ENCODE measurements at regions of chr1 and their contacts with region 1.

Region 1: GRCh38 chr1:23559136-23559984 is at the start of gene ID3:
- DNase-seq: peak; percentile 96
- H3K4me3 Mint-ChIP-seq: peak within 1 kb of the TSS; percentile 94
- H3K27ac Mint-ChIP-seq: peak within 1 kb of the TSS; percentile 90
- H3K4me1 Mint-ChIP-seq: peaks cover 49% of the 10 kb centered on the region
- H3K27me3 Mint-ChIP-seq: no peaks in the 10 kb centered on the region
- CTCF ChIP-seq: no peak
- total RNA-seq, gene ID3: 15.7 and 34.8 TPM in 2 replicates

Region 2: DNA sequence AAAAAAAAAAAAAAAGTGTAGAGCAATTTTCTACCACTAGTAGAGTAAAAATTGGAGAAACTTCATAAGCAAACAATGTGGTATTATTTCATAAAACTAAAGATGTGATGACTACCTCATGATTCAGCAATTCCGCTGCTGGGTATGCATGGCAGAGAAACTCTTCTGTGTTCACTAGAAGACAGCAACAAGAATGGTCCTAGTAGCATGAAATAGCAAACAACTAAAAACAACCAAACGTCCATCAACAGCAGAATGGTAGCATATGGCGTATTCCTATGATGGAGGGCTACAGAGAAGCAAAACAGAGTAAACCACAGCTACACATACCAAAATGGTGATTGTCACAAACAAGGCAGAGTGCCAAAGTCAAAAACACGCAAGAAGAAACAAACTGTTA is 361.0 kb before region 1 on chr1:
- CTCF ChIA-PET with region 1: no interaction called
- POLR2A ChIA-PET with region 1: no interaction called
- intact Hi-C with region 1: no loop called
- DNase-seq: peak; percentile 85
- H3K4me3 Mint-ChIP-seq: peak overlapping the region; percentile 36
- H3K27ac Mint-ChIP-seq: peak overlapping the region; percentile 89
- H3K4me1 Mint-ChIP-seq: peaks cover 33% of the 10 kb centered on the region
- H3K27me3 Mint-ChIP-seq: no peaks in the 10 kb centered on the region
- CTCF ChIP-seq: no peak

Region 3: DNA sequence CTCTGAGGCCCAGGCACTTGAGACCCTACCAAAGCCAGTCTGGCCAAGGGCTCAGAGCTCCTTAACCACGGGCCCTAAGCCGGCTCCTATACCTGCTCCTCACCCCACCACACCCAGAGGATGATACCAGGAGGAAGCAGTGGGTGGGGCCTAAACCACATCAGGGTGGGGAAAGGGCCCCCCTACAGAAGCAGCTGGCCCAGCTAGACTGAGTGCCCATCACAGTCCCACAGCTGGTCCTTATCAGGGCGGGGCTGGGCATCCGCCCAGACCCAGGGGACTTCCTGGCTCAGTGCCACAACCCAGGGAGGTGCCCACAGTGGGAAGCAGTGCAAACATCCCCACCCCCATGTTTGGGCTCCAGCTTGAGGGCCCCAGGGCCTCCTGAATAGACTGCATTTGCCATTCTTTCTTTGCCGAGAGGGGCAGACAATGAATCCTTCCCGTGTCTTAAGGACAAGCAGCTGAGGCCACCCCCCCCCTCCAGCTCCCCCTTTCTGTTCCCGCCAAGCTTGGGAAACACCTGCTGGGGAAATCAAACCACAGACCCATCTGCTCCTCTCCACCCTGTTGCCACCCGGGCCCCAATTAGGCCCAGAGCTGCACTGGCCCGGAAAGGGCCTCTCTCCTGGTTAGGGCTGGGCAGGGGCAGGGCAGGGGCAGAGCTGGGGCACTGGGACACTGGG is 34.5 kb before region 1 on chr1:
- CTCF ChIA-PET with region 1: no interaction called
- POLR2A ChIA-PET with region 1: no interaction called
- intact Hi-C with region 1: no loop called
- DNase-seq: no peak
- H3K4me3 Mint-ChIP-seq: no peak overlapping the region
- H3K27ac Mint-ChIP-seq: no peak overlapping the region
- H3K4me1 Mint-ChIP-seq: peaks cover 19% of the 10 kb centered on the region
- H3K27me3 Mint-ChIP-seq: no peaks in the 10 kb centered on the region
- CTCF ChIP-seq: no peak

Region 4: DNA sequence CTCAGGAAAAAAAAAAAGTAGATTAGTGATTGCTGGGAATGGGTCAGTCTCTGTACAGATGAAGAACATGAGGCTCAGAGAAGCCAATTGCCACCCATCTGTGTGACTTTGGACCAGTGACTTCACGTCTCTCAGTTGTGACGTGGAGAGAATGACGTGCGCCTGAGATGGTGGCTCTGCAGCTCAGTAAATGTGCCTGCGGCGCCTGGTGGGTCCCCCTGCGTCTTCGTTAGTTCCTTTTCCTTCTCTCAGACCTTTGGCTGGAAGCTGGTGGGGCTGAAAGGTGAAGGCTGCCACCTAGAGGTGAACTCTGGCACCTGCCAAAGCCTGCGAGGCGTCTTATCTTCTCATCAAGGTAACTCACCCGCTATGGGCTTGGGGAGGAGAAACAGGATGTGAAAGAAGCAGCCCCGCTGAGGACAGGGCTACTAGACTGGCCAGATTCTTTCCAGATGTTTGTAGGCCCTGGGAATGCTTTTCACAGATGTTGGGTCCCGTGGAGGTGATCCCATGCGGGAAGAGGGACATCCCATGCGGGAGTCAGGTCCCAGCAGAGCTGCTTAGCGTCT is 19.6 kb before region 1 on chr1:
- CTCF ChIA-PET with region 1: interaction called, 23 read pairs
- POLR2A ChIA-PET with region 1: interaction called, 8 read pairs
- intact Hi-C with region 1: no loop called
- DNase-seq: peak; percentile 90
- H3K4me3 Mint-ChIP-seq: no peak overlapping the region
- H3K27ac Mint-ChIP-seq: no peak overlapping the region
- H3K4me1 Mint-ChIP-seq: peaks cover 18% of the 10 kb centered on the region
- H3K27me3 Mint-ChIP-seq: no peaks in the 10 kb centered on the region
- CTCF ChIP-seq: peak; percentile 91

Region 5: GRCh38 chr1:23585447-23586015 is 26.2 kb after region 1 on chr1:
- CTCF ChIA-PET with region 1: interaction called, 7 read pairs
- POLR2A ChIA-PET with region 1: interaction called, 622 read pairs
- intact Hi-C with region 1: loop called (anchors 1 kb)
- DNase-seq: peak; percentile 96
- H3K4me3 Mint-ChIP-seq: peak overlapping the region; percentile 23
- H3K27ac Mint-ChIP-seq: peak overlapping the region; percentile 85
- H3K4me1 Mint-ChIP-seq: peaks cover 43% of the 10 kb centered on the region
- H3K27me3 Mint-ChIP-seq: no peaks in the 10 kb centered on the region
- CTCF ChIP-seq: no peak

Region 6: DNA sequence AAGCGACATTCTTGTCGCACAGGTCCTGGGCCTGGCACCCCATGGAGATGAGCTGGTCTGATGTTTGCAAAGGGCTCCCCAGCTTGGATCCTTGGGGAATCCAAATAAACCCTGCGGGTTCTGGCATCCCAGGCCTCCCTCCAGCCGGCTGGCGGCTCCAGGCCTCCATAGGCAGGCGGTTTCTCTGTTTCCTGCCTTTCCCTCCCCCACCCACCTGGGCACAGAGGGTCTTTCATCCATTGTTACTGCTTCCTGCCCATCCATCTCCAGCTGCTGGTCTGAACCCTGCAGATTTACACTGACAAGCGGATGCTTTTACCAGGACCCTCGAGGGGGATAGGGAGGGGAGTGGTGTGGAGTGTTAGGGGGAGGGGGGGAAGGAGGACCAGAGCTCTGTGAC is 39.1 kb after region 1 on chr1:
- CTCF ChIA-PET with region 1: interaction called, 9 read pairs
- POLR2A ChIA-PET with region 1: interaction called, 622 read pairs
- intact Hi-C with region 1: loop called (anchors 1 kb)
- DNase-seq: no peak
- H3K4me3 Mint-ChIP-seq: no peak overlapping the region
- H3K27ac Mint-ChIP-seq: no peak overlapping the region
- H3K4me1 Mint-ChIP-seq: peaks cover 25% of the 10 kb centered on the region
- H3K27me3 Mint-ChIP-seq: no peaks in the 10 kb centered on the region
- CTCF ChIP-seq: no peak

Region 7: DNA sequence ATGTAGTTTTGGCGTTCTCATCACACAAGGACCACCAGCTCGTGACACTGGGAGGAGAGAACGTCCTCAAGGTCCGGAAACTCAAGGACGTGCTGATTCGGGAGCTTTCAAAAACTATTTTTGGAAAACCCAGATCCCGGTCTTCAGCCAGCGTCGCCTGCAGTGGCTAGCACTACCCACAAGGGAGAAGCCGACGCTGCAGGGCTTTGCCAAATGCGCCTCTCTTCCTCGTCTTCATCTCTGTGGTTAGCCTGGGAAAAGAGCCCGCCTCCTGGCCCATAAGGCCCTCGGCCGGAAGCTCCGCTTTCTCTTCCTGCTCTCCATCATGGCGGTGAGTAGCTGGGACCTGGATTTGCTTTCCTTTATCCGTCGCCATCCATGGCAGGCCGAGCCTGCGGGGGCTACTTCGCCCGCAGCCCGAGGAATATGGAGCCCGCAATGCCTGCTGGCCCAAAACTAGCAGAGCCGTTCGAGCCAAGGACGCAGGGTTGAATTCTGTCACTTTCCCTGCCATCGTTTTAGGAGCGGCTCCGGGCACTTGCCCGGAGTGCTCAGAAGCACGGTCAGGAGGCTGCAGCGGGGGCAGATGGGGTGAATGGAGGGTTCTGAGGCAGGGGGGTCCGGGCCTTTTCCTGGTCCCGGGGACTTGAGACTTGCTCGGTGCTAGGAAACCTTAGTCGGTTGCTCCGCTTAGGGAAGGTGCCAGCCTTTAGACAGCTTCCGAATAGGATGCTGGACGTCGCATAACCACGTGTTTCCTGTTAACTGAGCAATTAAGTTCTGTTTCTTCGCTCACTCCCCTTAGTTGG is 132.3 kb after region 1 on chr1 and contains the start of gene RPL11:
- CTCF ChIA-PET with region 1: no interaction called
- POLR2A ChIA-PET with region 1: interaction called, 23 read pairs
- intact Hi-C with region 1: no loop called
- DNase-seq: peak; percentile 96
- H3K4me3 Mint-ChIP-seq: peak within 1 kb of the TSS; percentile 88
- H3K27ac Mint-ChIP-seq: peak within 1 kb of the TSS; percentile 97
- H3K4me1 Mint-ChIP-seq: peaks cover 35% of the 10 kb centered on the region
- H3K27me3 Mint-ChIP-seq: no peaks in the 10 kb centered on the region
- CTCF ChIP-seq: peak; percentile 44
- total RNA-seq, gene RPL11: 1,201 and 1,563 TPM in 2 replicates

Measured in MCF 10A (cell line).